ENCODE measurements at regions of chr5 and their contacts with region 1.

Region 1: GRCh38 chr5:113378959-113379541 is 55.7 kb downstream of the TSSK1B start:
- DNase-seq: peak; percentile 73
- H3K4me3 Mint-ChIP-seq: peak overlapping the region; percentile 51
- H3K27ac Mint-ChIP-seq: peak overlapping the region; percentile 80
- H3K4me1 Mint-ChIP-seq: peaks cover 70% of the 10 kb centered on the region
- H3K27me3 Mint-ChIP-seq: peaks cover 12% of the 10 kb centered on the region

Region 2: GRCh38 chr5:113330533-113331208 is 48.4 kb before region 1 on chr5:
- CTCF ChIA-PET with region 1: interaction called, 20 read pairs
- DNase-seq: no peak
- H3K4me3 Mint-ChIP-seq: no peak overlapping the region
- H3K27ac Mint-ChIP-seq: no peak overlapping the region
- H3K4me1 Mint-ChIP-seq: peaks cover 25% of the 10 kb centered on the region
- H3K27me3 Mint-ChIP-seq: peaks cover 13% of the 10 kb centered on the region

Region 3: DNA sequence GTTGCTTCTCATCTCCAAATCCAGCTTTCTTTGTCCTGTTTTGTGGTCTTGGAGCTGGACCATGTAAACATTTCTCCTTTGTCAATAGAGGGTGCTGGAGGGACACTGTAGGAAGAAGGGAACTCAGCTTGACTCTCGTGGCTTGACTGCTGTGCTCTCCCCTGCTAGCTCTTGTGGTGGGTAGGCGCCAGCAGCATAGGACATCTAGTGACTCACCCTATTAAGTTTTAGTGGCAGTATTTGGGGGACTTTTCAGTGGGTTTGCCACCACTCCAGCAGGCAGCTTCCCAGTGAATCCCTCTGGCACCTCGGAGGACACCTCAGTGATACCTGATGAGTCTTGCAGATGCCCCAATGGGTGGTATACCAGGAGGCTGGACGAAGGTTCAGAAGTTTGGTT is 42.1 kb before region 1 on chr5:
- CTCF ChIA-PET with region 1: interaction called, 20 read pairs
- DNase-seq: peak; percentile 38
- H3K4me3 Mint-ChIP-seq: no peak overlapping the region
- H3K27ac Mint-ChIP-seq: no peak overlapping the region
- H3K4me1 Mint-ChIP-seq: peaks cover 22% of the 10 kb centered on the region
- H3K27me3 Mint-ChIP-seq: peaks cover 41% of the 10 kb centered on the region

Region 4: DNA sequence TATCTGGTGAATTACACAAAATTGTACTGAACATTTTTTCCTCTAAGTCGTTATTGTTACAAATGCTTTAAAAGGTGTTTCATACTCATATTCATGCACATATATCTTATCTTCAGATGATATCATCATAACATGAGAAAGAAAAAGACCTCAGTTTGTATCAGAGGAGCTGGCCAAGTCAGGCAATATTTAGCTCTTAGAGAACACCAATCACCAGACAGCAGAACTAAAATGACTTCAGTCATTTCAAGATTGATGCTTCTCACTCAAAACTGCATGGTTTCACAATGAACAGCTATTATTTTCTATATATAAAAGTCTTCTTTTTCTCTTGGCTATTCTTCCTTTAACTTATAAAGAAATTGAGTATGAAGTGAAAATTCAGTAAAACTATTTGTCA is 11.2 kb after region 1 on chr5:
- CTCF ChIA-PET with region 1: interaction called, 17 read pairs
- DNase-seq: no peak
- H3K4me3 Mint-ChIP-seq: no peak overlapping the region
- H3K27ac Mint-ChIP-seq: no peak overlapping the region
- H3K4me1 Mint-ChIP-seq: no peaks in the 10 kb centered on the region
- H3K27me3 Mint-ChIP-seq: peaks cover 28% of the 10 kb centered on the region

Region 5: GRCh38 chr5:113513384-113514288 is 134.6 kb after region 1 on chr5 and contains the start of gene YTHDC2:
- CTCF ChIA-PET with region 1: interaction called, 31 read pairs
- DNase-seq: peak; percentile 91
- H3K4me3 Mint-ChIP-seq: peak within 1 kb of the TSS; percentile 86
- H3K27ac Mint-ChIP-seq: peak within 1 kb of the TSS; percentile 84
- H3K4me1 Mint-ChIP-seq: peaks cover 32% of the 10 kb centered on the region
- H3K27me3 Mint-ChIP-seq: peaks cover 19% of the 10 kb centered on the region

Measured in activated naive CD4-positive, alpha-beta T cell treated with anti-CD3 and anti-CD28 coated beads, Interleukin-2, amount 10 ng/mL, durations not matched to agents 7 days and 5 days (primary cell).